ENCODE measurements at regions of chr14 and their contacts with region 1.

Region 1: DNA sequence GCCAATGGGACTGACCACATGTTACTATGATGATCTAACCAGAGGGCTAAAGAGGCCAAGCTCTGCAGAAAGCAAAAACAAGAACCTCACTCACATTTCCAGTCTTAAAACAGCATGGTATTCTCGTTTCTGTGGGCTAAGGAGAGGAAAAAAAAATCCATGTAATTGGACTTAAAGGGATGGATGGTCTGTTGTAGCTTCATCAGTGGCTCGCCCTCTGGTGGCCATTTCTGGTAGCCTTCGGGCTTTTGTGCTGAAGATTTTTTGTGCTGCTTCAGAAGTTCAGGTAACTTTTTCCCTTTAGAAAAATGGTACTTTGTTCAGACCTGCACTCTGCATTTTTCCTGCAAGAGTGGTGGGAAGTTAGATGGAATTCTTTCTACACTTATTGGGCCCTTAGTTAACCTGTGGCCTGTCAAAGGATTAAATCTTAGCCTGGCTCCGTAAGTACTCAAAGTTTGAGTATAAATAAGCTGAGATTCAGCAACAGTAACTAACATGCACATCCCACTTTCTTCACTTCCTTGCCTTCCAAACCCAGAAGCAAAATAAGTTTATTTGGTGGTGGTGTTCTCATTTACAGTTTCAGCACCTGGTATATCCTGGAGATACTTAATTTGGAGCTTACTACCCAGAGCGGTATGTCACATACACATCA is 22.3 kb downstream of the DCAF4 start:
- DNase-seq: peak; percentile 48
- ATAC-seq: peak; percentile 60
- H3K4me3 Mint-ChIP-seq: no peak overlapping the region
- H3K27ac Mint-ChIP-seq: no peak overlapping the region
- H3K4me1 Mint-ChIP-seq: no peaks in the 10 kb centered on the region
- H3K27me3 Mint-ChIP-seq: no peaks in the 10 kb centered on the region
- CTCF ChIP-seq: no peak

Region 2: DNA sequence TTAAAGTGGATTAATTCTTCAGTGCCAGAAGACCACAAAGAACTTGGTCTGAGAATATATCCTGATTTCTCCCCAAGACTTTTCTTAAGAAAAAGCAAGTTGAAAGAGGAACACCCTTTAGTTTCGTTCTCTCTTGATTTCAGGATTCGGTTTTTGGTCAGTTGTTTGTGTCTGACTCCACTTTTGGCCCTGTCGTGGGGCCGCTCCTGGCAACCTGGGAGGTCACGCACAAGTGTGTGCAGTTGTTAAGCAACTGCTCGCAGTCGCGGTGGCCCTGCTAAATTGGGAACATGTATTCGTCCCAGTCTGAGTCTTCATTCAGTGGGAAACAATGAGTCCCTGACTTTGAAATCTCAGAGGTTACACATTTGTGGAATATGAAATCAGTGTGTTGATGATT is 947.7 kb before region 1 on chr14:
- CTCF ChIA-PET with region 1: no interaction called
- POLR2A ChIA-PET with region 1: no interaction called
- intact Hi-C with region 1: no loop called
- DNase-seq: no peak
- ATAC-seq: no peak
- H3K4me3 Mint-ChIP-seq: no peak overlapping the region
- H3K27ac Mint-ChIP-seq: no peak overlapping the region
- H3K4me1 Mint-ChIP-seq: no peaks in the 10 kb centered on the region
- H3K27me3 Mint-ChIP-seq: peaks cover 9% of the 10 kb centered on the region
- CTCF ChIP-seq: no peak

Region 3: DNA sequence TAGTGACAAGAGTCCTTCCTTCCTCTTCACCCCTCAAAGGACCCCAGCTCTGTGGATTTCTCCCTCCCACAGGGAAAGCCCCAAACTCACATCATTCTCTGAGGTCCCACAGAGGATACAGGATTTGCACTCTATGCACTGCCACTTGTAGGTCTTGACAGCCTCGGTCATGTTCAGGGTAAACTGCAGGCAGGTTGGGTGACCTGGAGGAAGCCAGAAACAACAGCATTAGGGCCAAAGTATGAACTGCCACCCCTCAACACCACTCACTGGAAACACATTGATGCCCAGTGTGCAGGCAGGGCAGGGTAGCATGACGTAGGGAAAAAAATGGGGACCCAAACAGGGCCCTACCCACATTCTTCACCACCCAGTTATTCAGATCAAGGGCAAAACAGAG is 319.1 kb before region 1 on chr14:
- CTCF ChIA-PET with region 1: no interaction called
- POLR2A ChIA-PET with region 1: no interaction called
- intact Hi-C with region 1: no loop called
- DNase-seq: no peak
- ATAC-seq: no peak
- H3K4me3 Mint-ChIP-seq: no peak overlapping the region
- H3K27ac Mint-ChIP-seq: no peak overlapping the region
- H3K4me1 Mint-ChIP-seq: peaks cover 5% of the 10 kb centered on the region
- H3K27me3 Mint-ChIP-seq: no peaks in the 10 kb centered on the region
- CTCF ChIP-seq: no peak

Region 4: DNA sequence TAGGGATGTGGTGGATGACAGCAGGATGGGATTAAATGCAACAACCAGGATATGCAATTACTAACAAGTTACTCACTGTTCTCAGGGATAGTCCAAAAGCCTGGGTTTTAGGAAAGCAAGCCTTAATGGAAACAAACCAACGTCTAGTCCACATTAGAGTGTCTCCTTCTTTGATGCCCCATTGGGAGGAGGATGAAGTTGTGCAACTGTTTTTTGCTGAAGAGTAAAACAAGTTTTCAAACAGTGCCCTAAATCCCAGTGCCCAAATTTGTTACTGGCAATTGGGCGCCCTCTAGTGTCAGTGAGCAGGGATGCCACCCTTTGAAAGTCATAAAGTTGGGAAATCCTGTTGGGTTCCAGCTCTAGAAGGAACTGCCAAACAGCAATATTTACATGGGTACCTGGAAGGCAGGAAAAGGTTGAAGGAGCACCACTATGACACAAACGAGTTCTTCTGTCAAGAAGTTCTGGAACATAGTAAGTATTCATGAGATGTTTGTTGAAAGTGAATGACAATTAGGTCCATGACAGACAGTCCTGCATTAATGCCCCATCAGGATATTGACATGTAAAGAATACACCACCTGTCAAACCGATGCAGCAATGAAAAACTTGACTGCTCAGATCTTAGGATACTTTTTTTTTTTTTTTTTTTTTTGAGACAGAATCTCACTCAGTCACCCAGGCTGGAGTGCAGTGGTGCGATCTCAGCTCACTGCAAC is 43.6 kb before region 1 on chr14:
- CTCF ChIA-PET with region 1: interaction called, 10 read pairs
- POLR2A ChIA-PET with region 1: no interaction called
- intact Hi-C with region 1: loop called (anchors 1 kb)
- DNase-seq: no peak
- ATAC-seq: peak; percentile 79
- H3K4me3 Mint-ChIP-seq: no peak overlapping the region
- H3K27ac Mint-ChIP-seq: no peak overlapping the region
- H3K4me1 Mint-ChIP-seq: peaks cover 17% of the 10 kb centered on the region
- H3K27me3 Mint-ChIP-seq: no peaks in the 10 kb centered on the region
- CTCF ChIP-seq: no peak

Region 5: GRCh38 chr14:72962829-72963312 is 14.3 kb after region 1 on chr14:
- CTCF ChIA-PET with region 1: interaction called, 10 read pairs
- POLR2A ChIA-PET with region 1: interaction called, 3 read pairs
- intact Hi-C with region 1: no loop called
- DNase-seq: no peak
- ATAC-seq: no peak
- H3K4me3 Mint-ChIP-seq: no peak overlapping the region
- H3K27ac Mint-ChIP-seq: no peak overlapping the region
- H3K4me1 Mint-ChIP-seq: no peaks in the 10 kb centered on the region
- H3K27me3 Mint-ChIP-seq: no peaks in the 10 kb centered on the region
- CTCF ChIP-seq: no peak